Calu3 (cell line): ENCODE measurements at regions of chr16 and their contacts with region 1.

Region 1: GRCh38 chr16:106623-107324 is 28.7 kb downstream of the MPG start:
- DNase-seq: peak; percentile 66
- H3K4me3 Mint-ChIP-seq: no peak overlapping the region
- H3K27ac Mint-ChIP-seq: no peak overlapping the region
- H3K4me1 Mint-ChIP-seq: no peaks in the 10 kb centered on the region
- H3K27me3 Mint-ChIP-seq: no peaks in the 10 kb centered on the region
- CTCF ChIP-seq: peak; percentile 88

Region 2: DNA sequence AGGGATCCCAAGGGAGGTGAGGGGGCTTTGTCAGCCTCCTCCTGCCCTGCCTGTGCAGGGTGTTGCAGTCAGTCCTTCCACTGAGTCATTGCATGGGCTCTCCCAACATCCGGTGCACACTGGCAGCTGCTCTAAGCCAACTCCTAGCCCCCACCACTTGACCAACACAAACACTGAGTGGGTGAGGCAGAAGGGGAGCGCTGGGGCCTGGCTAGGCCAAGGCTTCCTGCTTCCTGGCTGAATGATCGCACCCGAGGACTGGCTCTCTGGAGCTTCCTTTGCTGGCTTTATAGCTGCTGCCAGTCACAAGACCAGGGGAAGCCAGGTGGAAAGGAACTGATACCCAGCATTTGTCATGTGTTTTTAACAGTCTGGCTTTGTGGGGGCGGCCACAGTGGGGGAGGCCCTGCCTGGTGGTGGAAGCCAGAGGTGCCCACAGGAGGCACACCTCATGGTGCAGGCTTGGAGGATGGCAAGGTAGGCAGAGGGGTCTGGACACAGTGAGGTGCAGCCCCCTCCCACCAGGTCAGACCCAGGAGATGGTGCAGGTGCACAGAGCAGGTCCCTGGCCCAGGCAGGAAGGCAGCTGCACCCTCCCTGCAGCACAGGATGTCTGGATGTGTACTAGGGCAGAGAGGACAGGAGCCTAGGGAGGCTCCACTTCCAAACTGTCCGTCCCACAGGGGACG is 21.9 kb before region 1 on chr16:
- CTCF ChIA-PET with region 1: no interaction called
- intact Hi-C with region 1: no loop called
- DNase-seq: peak; percentile 48
- H3K4me3 Mint-ChIP-seq: no peak overlapping the region
- H3K27ac Mint-ChIP-seq: peak overlapping the region; percentile 21
- H3K4me1 Mint-ChIP-seq: peaks cover 18% of the 10 kb centered on the region
- H3K27me3 Mint-ChIP-seq: no peaks in the 10 kb centered on the region
- CTCF ChIP-seq: no peak

Region 3: DNA sequence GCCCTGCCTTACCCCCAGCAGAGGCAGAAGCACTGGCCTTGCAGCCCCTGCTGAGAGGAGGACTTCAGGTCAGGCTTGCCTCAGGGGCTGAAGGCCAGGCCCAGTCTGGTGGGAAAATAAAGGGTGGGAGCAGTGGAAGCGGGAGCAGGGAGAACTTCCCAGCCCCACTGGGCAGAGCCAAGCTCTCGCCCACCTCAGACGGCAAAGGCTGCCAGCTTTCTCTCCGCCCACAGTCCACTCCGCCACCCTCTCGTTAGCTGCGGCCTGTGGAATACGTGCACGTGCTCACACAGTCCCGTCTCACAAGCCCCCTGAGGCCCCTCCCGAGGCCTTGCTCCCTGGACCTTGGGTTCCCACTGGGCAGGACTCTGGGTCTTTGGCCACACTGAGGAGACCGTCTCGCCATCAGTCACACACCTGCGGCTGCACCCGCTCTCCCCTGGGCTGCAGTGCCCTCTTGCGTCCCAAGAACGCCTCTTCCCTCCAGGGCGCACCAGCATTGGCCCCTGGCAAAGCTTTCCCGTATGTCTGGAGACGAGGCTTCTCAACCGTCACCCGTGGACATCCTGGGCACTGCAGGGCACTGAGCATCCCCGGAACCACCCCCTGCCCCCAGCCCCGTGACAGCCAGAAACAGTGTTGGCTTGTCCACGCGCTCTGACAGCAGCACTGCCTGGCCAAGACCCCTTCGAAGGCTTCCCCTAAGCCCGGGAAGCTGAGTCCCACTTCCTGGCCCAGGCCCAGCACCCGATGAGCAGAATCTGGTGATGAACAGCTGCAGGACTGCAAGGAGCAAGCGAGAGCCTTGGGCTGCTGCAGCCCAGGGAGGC is 255.3 kb after region 1 on chr16:
- CTCF ChIA-PET with region 1: interaction called, 32 read pairs
- intact Hi-C with region 1: loop called (anchors 1 kb)
- DNase-seq: peak; percentile 91
- H3K4me3 Mint-ChIP-seq: peak overlapping the region; percentile 10
- H3K27ac Mint-ChIP-seq: no peak overlapping the region
- H3K4me1 Mint-ChIP-seq: no peaks in the 10 kb centered on the region
- H3K27me3 Mint-ChIP-seq: peaks cover 20% of the 10 kb centered on the region
- CTCF ChIP-seq: peak; percentile 89